ENCODE measurements at regions of chr2 and their contacts with region 1.

Region 1: GRCh38 chr2:18149645-18150246 is 271.3 kb downstream of the KCNS3 start:
- DNase-seq: peak; percentile 57
- H3K4me3 ChIP-seq: no peak overlapping the region
- H3K27ac ChIP-seq: no peak overlapping the region
- H3K4me1 ChIP-seq: no peaks in the 10 kb centered on the region
- H3K27me3 ChIP-seq: no peaks in the 10 kb centered on the region
- CTCF ChIP-seq: peak; percentile 80
- EP300 ChIP-seq: no peak
- RAD21 ChIP-seq: peak; percentile 85

Region 2: GRCh38 chr2:17719562-17720371 is 430.0 kb before region 1 on chr2:
- CTCF ChIA-PET with region 1: interaction called, 18 read pairs
- POLR2A ChIA-PET with region 1: no interaction called
- DNase-seq: peak; percentile 24
- H3K4me3 ChIP-seq: no peak overlapping the region; a peak in 1 of 4 replicates
- H3K27ac ChIP-seq: 0 out of 4 replicates have a peak overlapping the region, but pooled peaks of 1 of the 2 experiments have one; percentile 5
- H3K4me1 ChIP-seq: no peaks in the 10 kb centered on the region
- H3K27me3 ChIP-seq: no peaks in the 10 kb centered on the region
- CTCF ChIP-seq: peak; percentile 94
- EP300 ChIP-seq: no peak
- RAD21 ChIP-seq: peak; percentile 82

Region 3: GRCh38 chr2:17851731-17852585 is 297.8 kb before region 1 on chr2:
- CTCF ChIA-PET with region 1: interaction called, 90 read pairs
- POLR2A ChIA-PET with region 1: no interaction called
- DNase-seq: peak; percentile 76
- H3K4me3 ChIP-seq: no peak overlapping the region; a peak in 1 of 4 replicates
- H3K27ac ChIP-seq: no peak overlapping the region
- H3K4me1 ChIP-seq: no peaks in the 10 kb centered on the region; a peak in 1 of 4 replicates
- H3K27me3 ChIP-seq: no peaks in the 10 kb centered on the region; the same call in 1 of the 2 replicates
- CTCF ChIP-seq: peak; percentile 95
- EP300 ChIP-seq: no peak
- RAD21 ChIP-seq: peak; percentile 98

Region 4: DNA sequence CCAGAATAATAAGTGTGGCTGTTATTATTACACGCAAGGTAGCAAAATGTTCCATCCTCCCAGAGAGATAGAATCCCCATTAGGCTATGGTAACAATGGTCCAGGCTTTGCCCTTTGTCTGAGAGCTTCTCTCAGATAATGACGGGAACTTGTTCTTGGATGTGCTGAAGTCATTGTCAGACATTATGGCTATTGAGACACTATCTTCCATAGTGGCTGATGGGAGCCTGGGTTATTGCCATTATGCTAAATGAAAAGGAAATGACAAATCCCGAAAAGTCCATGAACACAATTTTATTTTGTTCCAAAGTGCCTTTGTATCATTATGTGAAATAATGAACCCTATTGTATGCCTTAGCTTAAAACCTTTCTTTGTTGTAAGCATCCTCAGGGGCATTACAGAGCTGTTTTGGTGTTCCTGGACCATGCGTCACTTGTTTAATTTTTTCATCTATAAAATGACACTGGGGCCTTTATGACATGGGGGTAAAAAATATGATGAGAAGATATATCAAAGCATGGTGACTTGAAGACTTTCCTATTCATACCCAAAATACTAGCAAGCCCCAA is 52.8 kb before region 1 on chr2:
- CTCF ChIA-PET with region 1: interaction called, 14 read pairs
- POLR2A ChIA-PET with region 1: no interaction called
- DNase-seq: no peak
- H3K4me3 ChIP-seq: no peak overlapping the region
- H3K27ac ChIP-seq: no peak overlapping the region
- H3K4me1 ChIP-seq: no peaks in the 10 kb centered on the region
- H3K27me3 ChIP-seq: no peaks in the 10 kb centered on the region
- CTCF ChIP-seq: no peak
- EP300 ChIP-seq: no peak
- RAD21 ChIP-seq: no peak

Region 5: GRCh38 chr2:18159896-18160295 is 10.2 kb after region 1 on chr2:
- CTCF ChIA-PET with region 1: interaction called, 26 read pairs
- POLR2A ChIA-PET with region 1: no interaction called
- DNase-seq: no peak
- H3K4me3 ChIP-seq: no peak overlapping the region
- H3K27ac ChIP-seq: no peak overlapping the region
- H3K4me1 ChIP-seq: peaks cover 0 to 4% of the 10 kb centered on the region in 2 experiments; a peak in 1 of 4 replicates
- H3K27me3 ChIP-seq: no peaks in the 10 kb centered on the region; the same call in 1 of the 2 replicates
- CTCF ChIP-seq: no peak
- EP300 ChIP-seq: no peak
- RAD21 ChIP-seq: no peak

Region 6: DNA sequence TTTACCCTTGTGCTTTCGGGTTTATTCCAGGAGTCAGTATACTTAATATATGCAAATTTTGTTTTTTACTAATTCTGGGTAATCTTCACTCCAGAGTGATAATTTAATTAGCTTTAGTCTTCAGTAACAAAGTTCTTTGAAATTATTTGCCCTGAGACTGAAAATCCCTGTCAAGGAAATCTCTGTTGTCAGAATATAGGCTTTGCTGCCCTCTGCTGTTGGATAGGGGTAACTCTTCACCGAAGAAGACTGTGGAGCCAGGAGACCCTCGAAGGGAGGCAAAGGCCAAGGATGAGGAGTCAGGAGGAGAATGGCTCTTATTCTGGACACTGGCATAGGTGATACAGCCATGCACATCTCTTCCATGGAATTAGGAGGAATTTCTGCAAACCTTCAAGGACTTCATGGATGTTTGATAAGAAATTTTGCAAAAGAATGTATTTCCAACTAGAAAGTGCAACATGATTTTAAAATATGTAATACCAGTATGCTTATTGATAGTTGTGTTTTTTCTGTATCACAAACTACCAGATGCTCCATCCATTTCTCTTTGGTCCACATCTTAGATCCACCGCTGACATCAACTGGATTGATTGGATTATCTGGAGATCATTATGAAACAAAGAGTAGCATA is 228.4 kb after region 1 on chr2:
- CTCF ChIA-PET with region 1: interaction called, 20 read pairs
- POLR2A ChIA-PET with region 1: no interaction called
- DNase-seq: peak; percentile 62
- H3K4me3 ChIP-seq: no peak overlapping the region; a peak in 1 of 4 replicates
- H3K27ac ChIP-seq: no peak overlapping the region
- H3K4me1 ChIP-seq: no peaks in the 10 kb centered on the region
- H3K27me3 ChIP-seq: peaks cover 12% of the 10 kb centered on the region; the same call in 1 of the 2 replicates
- CTCF ChIP-seq: peak; percentile 98
- EP300 ChIP-seq: no peak
- RAD21 ChIP-seq: peak; percentile 86

Measured in SK-N-SH (cell line).